Breast epithelium (tissue), 4 donors: ENCODE measurements at regions of chr1 and their contacts with region 1.

Region 1: DNA sequence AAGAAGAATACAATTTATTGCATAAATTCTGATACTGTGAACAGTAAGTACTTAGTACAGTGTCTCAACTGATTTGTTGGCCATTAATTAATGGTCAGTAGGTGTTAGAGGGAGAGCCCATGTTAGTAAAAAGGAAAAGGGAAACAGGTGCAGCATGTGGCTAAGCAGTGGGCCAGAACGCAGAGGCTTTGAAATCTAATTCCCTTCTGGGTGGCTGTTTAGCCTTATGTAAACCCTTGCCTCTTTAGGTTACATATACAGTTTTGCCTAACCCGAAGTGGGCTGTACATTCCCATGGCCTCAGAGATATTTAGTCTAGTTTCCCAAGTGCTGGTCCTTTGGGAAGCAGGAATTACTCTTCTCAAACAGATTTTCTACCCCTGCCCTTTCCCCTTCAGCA is 43.5 kb upstream of the BCL9 start:
- DNase-seq: no peak
- H3K4me3 ChIP-seq: no peak overlapping the region
- H3K27ac ChIP-seq: no peak overlapping the region
- H3K4me1 ChIP-seq: peaks cover 0 to 4% of the 10 kb centered on the region in 2 donors
- H3K27me3 ChIP-seq: no peaks in the 10 kb centered on the region
- CTCF ChIP-seq: no peak
- POLR2A ChIP-seq: no peak

Region 2: DNA sequence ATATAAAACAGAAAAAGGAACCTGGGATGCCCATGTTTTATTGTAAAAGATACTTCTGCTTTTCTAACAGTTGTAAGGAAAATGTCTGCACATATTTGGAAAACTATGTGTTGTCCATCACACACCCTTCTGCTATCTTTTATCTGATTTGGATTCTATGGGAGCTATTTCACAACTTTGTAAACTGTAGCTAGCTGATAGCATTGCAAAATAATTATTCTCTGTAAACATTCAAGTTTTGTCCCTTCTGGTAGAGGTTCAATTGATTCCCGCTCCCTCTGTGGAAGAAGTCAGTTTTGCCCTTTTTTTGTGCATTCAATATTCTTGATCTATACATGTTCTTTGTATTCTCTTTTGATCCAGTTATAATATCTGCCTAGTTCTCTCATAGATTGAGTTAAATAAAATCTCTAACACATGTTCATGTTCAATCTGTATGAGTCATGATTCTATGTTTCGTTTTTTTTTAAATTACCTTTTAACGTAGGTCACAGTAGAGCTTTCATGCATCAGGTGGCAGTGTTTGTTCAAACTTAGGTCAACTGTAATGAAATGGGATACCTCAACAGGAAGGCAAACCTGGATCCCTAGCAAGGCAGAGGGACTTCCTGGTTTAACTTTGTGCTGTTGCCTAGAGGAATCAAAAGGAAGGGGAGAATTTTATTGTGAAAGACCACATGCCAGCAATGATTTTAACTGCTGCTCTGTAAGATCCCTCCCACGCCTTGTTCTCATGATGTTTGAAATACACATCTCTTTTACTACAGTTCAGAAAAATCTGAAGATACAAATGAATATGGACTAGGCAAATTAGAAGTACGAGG is 17.4 kb after region 1 on chr1:
- intact Hi-C with region 1: loop called (anchors 2 kb)
- DNase-seq: no peak
- H3K4me3 ChIP-seq: no peak overlapping the region
- H3K27ac ChIP-seq: peak overlapping the region in 1 of 2 donors; percentile 22
- H3K4me1 ChIP-seq: no peaks in the 10 kb centered on the region
- H3K27me3 ChIP-seq: no peaks in the 10 kb centered on the region
- CTCF ChIP-seq: peak in 2 of 3 donors; percentile 18 to 27
- POLR2A ChIP-seq: no peak